Activated CD4-positive, alpha-beta T cell treated with anti-CD3 and anti-CD28 coated beads, Interleukin-2, amount 10 ng/mL, durations not matched to agents 24 days and 14 days (primary cell): ENCODE measurements at regions of chr3 and their contacts with region 1.

Region 1: DNA sequence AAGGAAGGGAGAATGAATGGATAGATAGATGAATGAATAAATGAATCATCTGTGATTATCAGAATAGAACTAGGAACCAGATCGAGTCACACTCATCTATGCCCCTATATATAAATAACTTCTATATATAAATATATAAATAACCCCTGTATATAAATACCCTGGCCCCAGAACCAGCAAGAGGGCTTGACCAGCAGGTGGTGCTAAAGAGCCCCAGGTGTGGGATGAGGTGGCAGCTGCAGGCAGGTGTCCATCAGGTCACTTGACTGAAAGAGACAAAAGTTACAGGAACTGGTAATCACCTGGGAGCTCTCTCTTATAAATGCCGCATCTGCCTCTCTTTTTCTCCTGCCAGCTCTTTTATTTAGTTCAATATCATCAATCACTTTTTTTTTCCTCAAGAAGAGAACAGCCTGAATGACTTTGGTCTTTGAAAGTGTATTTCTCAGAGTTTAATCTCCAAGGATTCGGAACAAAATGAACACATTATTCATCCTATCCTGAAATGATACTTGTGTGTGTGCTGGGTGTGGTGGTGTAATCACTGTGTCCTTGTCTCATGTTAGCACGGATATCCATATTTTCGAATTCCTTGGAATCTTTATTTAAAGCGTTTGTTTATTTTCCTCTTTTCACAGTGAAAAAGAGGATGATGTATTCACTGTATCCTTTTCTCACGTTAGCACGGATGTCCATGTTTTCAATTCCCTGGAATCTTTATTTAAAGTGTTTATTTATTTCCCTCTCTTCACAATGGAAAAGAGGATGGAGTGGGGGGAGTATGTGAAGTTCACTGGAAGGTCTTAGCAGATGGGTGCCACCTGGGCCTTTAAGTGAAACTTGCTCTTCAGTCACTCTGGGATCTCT is 35.4 kb upstream of the ATG7 start:
- DNase-seq: peak; percentile 93
- H3K4me3 Mint-ChIP-seq: no peak overlapping the region
- H3K27ac Mint-ChIP-seq: no peak overlapping the region
- H3K4me1 Mint-ChIP-seq: peaks cover 21% of the 10 kb centered on the region
- H3K27me3 Mint-ChIP-seq: peaks cover 27% of the 10 kb centered on the region

Region 2: DNA sequence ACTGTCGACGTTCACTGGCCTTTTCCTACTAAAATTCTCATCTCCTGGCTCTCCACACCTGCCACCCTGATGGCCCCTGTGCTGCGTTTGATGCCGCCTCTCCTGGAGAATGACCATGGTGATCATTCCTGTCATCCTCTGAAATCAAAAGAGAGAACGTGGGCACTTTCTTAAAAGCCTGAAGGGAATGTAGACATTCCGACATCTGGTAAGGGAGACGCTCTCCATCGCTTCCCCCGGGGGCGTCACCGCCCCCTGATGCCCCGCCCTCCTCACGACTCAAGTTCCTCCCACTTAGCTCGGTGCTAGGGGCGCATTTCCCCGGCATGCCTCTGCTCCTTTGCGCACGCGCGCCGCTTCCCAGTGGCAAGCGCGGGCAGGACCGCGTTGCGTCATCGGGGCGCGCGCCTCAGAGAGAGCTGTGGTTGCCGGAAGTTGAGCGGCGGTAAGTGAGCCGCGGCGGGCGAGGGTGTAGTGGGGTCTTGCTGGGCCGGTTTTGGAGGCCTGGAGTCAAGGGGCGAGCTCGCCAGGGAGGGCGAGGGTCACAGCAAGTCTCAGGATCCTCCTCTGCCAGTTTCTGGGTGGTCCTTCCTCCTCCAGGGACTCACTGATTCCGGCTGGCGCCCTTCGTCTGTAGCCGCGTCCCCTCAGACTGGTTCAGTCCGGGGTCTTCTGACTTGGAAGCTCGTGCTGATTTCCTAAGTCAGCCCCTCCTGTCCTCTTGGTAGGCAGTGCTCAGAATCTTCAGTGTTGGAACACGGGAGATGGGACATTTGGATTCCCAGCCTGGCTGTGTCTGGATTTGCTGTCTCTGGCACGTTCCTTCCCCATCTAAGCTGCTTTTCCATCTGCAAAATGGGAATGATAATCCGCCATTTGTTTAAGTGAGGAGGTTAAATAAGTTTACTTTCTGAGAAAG is 35.4 kb after region 1 on chr3 and contains the start of gene ATG7:
- intact Hi-C with region 1: loop called (anchors 1 kb)
- DNase-seq: peak; percentile 99
- H3K4me3 Mint-ChIP-seq: peak within 1 kb of the TSS; percentile 96
- H3K27ac Mint-ChIP-seq: peak within 1 kb of the TSS; percentile 94
- H3K4me1 Mint-ChIP-seq: peaks cover 43% of the 10 kb centered on the region
- H3K27me3 Mint-ChIP-seq: peaks cover 4% of the 10 kb centered on the region
- total RNA-seq, gene ATG7: 37.7 and 41.4 TPM in 2 replicates

Region 3: GRCh38 chr3:11306817-11307589 is 70.2 kb after region 1 on chr3:
- intact Hi-C with region 1: loop called (anchors 1 kb)
- DNase-seq: peak; percentile 77
- H3K4me3 Mint-ChIP-seq: peak overlapping the region; percentile 3
- H3K27ac Mint-ChIP-seq: no peak overlapping the region
- H3K4me1 Mint-ChIP-seq: peaks cover 26% of the 10 kb centered on the region
- H3K27me3 Mint-ChIP-seq: no peaks in the 10 kb centered on the region

Region 4: GRCh38 chr3:11556851-11557644 is 320.2 kb after region 1 on chr3:
- intact Hi-C with region 1: no loop called
- DNase-seq: no peak
- H3K4me3 Mint-ChIP-seq: no peak overlapping the region
- H3K27ac Mint-ChIP-seq: no peak overlapping the region
- H3K4me1 Mint-ChIP-seq: peaks cover 8% of the 10 kb centered on the region
- H3K27me3 Mint-ChIP-seq: no peaks in the 10 kb centered on the region

Region 5: GRCh38 chr3:11626084-11626463 is 389.2 kb after region 1 on chr3:
- intact Hi-C with region 1: loop called (anchors 1 kb)
- DNase-seq: peak; percentile 81
- H3K4me3 Mint-ChIP-seq: peak overlapping the region; percentile 57
- H3K27ac Mint-ChIP-seq: peak overlapping the region; percentile 77
- H3K4me1 Mint-ChIP-seq: peaks cover 56% of the 10 kb centered on the region
- H3K27me3 Mint-ChIP-seq: no peaks in the 10 kb centered on the region